ENCODE measurements at regions of chr5 and their contacts with region 1.

Region 1: GRCh38 chr5:172479044-172479783 is 24.9 kb upstream of the SH3PXD2B start:
- DNase-seq: peak; percentile 81 to 91 (median 86)
- ATAC-seq: peak; percentile 100
- H3K4me3 ChIP-seq: no peak overlapping the region
- H3K4me1 ChIP-seq: no peaks in the 10 kb centered on the region
- CTCF ChIP-seq: peak; percentile 60

Region 2: DNA sequence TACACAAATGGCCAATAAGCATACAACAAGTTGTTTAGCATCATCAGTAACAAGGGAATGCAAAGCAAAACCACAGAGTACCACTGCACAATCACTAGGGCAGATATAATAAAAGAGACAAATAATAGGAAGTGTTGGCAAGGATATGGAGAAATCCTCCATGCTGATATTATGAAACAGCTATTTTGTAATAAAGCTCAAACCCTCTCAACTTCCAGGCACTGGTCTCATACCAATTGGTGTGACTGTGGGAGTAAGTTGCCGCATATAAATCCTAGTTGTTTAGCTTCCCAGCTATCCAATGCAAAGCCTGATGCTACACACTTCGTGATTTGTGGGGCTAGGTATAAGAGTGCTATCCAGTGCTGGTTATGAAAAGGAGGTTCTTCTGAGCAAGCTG is 605.0 kb before region 1 on chr5:
- intact Hi-C with region 1: no loop called
- DNase-seq: no peak
- ATAC-seq: no peak
- H3K4me3 ChIP-seq: no peak overlapping the region
- H3K4me1 ChIP-seq: no peaks in the 10 kb centered on the region
- CTCF ChIP-seq: no peak

Region 3: DNA sequence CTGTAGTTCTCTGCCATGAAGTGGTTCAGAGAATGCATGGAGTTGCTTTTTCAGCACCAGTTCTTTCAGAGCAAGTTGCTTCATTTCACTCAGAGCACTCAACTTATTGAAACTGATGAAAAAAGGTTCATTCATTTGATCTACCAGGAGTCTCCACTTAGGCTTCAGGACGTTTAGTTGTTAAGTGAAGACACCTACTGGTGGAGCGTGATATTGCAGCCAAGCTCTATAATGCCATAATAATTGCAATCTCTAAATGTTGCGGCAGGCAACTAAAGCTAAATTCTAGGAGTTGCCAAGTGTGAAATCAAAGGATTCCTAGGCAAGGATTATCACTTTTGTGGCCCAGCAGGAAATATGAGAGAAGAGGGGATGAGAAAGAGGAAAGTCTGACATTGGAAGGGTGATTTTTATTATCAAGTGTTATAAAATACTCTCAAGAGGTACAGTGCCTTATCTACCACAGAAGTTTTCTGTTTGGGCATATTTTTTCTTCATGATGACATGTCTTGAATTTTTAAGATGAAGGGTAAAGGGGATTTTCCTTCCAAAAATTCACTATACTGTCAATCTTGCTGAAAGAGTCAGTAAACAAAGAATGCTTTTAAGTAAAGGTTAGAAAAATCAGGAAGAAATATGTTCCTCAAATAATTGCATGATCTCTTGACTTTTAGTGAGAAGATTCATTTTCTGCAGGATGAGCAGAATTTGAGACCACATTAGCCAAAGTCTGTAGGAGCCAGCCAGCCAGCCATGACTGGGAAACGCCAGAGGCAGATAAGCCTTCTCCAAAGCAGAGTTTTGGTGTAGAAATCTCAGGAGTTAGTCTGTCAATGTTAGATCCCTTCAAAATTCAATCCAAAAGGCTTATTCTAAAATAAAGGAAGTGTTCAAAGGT is 108.3 kb before region 1 on chr5:
- intact Hi-C with region 1: no loop called
- DNase-seq: peak in 1 of 3 donors; percentile 48
- ATAC-seq: no peak
- H3K4me3 ChIP-seq: no peak overlapping the region
- H3K4me1 ChIP-seq: no peaks in the 10 kb centered on the region
- CTCF ChIP-seq: peak; percentile 43

Region 4: GRCh38 chr5:172640822-172641358 is 161.7 kb after region 1 on chr5 and contains the start of gene NEURL1B:
- intact Hi-C with region 1: loop called in 1 of 2 experiments (anchors 5 kb)
- DNase-seq: peak; percentile 84 to 90 (median 88)
- ATAC-seq: peak; percentile 69
- H3K4me3 ChIP-seq: peak within 1 kb of the TSS; percentile 80
- H3K4me1 ChIP-seq: peaks cover 47% of the 10 kb centered on the region
- CTCF ChIP-seq: no peak
- total RNA-seq, gene NEURL1B: 65.7 to 97.6 (median 96.6) TPM

Region 5: DNA sequence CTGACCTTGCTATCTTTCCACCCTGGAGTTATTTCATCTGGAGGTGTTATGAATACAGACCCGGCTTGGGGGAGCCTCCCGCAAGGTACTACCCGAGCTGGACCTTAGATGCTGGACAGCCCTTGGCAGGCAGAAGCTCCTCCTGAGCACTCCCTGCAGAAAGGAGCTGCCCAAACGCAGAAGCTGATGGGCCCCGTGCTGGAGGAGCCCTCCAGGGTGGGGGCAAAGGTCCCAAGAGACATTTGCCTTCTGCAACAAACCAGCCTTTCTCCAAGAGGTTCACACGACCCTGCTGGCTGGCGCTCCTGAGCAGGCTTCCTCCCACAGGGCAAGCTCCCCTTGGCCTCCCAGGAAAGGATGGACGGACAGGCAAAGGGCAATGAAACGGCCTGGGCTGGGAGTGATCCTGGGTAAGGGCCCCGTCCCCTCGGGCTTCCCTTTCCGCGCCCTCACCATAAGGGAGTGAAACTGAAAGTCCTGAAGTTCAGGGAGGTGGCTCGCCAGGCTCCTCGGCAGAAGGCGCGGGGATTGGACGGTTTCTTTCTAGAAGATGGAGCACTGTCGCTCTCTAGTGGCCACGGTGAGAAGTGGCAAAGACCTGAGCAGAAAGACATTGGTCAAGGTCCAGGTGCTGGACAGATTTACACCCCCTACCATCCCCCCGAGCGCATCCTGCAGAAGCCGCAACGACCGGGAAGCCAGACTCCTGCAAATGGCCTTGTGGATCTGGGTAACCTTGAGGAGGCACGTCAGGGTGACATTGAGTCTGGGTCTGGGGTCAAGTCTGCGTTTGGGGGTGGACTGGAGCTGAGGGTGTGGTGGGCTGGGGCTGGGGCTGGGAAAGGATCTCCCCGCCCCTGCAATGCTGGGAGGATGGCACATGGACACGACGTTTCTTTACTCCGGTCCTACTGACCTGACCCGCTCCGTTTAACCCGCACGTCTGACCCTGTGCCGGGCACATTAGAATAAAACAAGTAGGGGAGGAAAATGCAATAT is 218.2 kb after region 1 on chr5:
- intact Hi-C with region 1: loop called (anchors 2 to 5 kb)
- DNase-seq: peak; percentile 89 to 93 (median 91)
- ATAC-seq: peak; percentile 94
- H3K4me3 ChIP-seq: peak overlapping the region; percentile 24
- H3K4me1 ChIP-seq: peaks cover 2% of the 10 kb centered on the region
- CTCF ChIP-seq: peak; percentile 92

Region 6: DNA sequence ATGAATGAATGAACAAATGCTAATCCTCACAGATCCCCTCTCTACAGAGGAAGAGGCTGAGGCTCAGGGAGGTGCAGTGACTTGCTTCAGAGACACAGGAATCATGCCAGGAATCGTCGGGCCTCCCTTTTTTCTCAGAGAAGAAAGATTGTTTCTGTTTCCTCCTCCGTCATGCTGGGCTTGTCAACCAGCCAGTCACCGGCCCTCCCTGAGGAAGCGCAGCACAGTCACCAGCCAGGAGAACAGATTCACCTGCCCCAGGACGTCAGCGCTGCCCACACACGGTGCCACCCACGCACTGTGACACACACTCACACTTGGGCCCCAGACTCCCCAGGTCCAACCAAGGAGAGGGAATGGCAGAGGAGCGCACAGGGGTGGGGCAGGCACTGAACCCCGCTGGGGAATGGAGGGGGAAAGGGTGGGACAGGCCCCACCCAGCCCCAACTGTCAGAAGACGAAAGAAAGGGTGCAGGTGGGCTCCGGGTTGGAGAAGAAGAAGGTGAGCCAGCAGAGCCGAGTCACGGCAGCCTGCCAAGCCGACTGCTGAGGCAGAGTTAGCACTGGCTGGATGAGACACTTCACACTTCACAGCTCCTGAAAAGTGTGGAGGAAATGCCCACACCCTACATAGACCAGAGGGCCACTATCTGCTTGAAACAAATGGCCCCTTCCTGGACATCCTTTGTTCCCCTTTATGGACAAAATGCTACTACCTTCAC is 341.0 kb after region 1 on chr5:
- intact Hi-C with region 1: no loop called
- DNase-seq: peak; percentile 70 to 84 (median 79)
- ATAC-seq: peak; percentile 97
- H3K4me3 ChIP-seq: no peak overlapping the region
- H3K4me1 ChIP-seq: peaks cover 5% of the 10 kb centered on the region
- CTCF ChIP-seq: no peak

Region 7: GRCh38 chr5:172943283-172943841 is 464.1 kb after region 1 on chr5:
- intact Hi-C with region 1: loop called in 1 of 2 experiments (anchors 10 kb)
- DNase-seq: peak in 1 of 3 donors; percentile 17
- ATAC-seq: no peak
- H3K4me3 ChIP-seq: no peak overlapping the region
- H3K4me1 ChIP-seq: no peaks in the 10 kb centered on the region
- CTCF ChIP-seq: no peak

Region 8: GRCh38 chr5:172958331-172959046 is 479.3 kb after region 1 on chr5:
- intact Hi-C with region 1: no loop called
- DNase-seq: peak; percentile 76 to 82 (median 77)
- ATAC-seq: peak; percentile 90
- H3K4me3 ChIP-seq: peak overlapping the region; percentile 70
- H3K4me1 ChIP-seq: peaks cover 5% of the 10 kb centered on the region
- CTCF ChIP-seq: no peak

Measured in mucosa of descending colon (tissue), 3 donors.